ENCODE measurements at regions of chr2 and their contacts with region 1.

Region 1: GRCh38 chr2:217166241-217166850 is 306.5 kb upstream of the TNP1 start:
- DNase-seq: no peak
- ATAC-seq: peak; percentile 48 to 76 (median 69)
- H3K4me3 ChIP-seq: no peak overlapping the region
- H3K27ac ChIP-seq: no peak overlapping the region
- H3K4me1 ChIP-seq: peaks cover 19% of the 10 kb centered on the region
- H3K27me3 ChIP-seq: no peaks in the 10 kb centered on the region
- CTCF ChIP-seq: peak; percentile 70

Region 2: DNA sequence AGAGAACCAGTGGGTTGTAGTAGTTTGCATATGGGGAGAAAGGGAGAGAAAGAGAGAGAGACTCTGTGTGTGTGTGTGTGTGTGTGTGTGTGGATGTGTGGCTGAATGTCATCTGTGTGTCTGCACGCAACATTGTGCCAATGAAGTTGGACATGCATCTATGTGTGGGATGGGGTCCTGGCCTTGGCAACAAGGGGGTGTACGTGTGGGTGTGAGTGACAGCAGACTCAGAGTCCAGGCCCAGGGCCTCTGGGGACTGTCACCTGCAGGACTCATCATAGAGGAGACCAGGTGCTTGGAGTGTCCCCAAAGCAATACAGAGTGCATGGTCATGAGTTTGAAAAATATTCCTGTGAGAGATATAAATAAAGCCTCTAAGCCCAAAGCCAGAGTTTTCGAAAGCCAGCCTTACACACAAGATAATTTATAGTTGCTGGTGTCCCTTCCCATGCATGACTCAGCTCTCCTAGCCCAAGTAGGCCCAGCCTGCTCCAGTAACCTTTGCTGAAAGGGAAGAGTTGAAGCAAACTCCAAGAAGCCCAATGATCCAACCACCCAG is 366.4 kb before region 1 on chr2:
- intact Hi-C with region 1: loop called in 1 of 2 experiments (anchors 5 kb)
- DNase-seq: peak; percentile 69 to 85
- ATAC-seq: peak; percentile 76 to 80 (median 78)
- H3K4me3 ChIP-seq: no peak overlapping the region
- H3K27ac ChIP-seq: peak overlapping the region; percentile 97
- H3K4me1 ChIP-seq: peaks cover 58% of the 10 kb centered on the region
- H3K27me3 ChIP-seq: no peaks in the 10 kb centered on the region
- CTCF ChIP-seq: no peak

Region 3: DNA sequence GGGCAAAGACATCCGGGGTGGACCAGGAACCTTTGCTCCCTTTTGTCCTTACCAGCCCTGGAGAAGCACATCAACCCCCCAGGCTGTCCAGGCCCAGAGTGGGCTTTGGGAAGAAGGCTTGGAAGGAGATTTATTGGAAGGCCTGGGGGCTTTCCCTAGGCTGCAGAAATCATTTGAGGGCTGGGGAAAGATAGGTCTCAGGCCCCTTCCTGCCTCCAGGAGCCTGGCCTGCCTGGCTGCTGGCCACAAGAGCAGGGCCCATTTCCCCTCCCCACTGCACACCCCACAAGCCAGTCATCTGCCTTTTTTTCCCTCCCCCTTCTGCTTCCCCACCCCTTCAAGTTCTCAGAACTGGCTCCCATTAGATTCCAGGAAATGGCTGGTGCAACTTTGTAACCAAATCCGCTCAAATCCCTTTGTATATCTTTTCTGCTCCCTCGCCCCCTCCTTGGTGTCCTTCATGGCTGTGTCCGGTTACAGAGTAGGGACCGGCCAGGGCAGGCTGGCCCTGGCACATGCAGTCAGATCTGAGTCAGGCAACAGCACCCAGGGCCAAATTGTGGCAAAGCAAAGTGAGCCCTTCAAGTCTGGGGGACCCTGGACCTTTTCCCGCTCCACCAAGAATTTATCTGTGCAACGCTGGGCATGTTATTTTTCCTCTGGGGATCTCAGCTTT is 285.7 kb before region 1 on chr2:
- intact Hi-C with region 1: loop called in 1 of 2 experiments (anchors 10 kb)
- DNase-seq: peak; percentile 72 to 90
- ATAC-seq: peak; percentile 87 to 91 (median 88)
- H3K4me3 ChIP-seq: no peak overlapping the region
- H3K27ac ChIP-seq: peak overlapping the region; percentile 90
- H3K4me1 ChIP-seq: peaks cover 75% of the 10 kb centered on the region
- H3K27me3 ChIP-seq: no peaks in the 10 kb centered on the region
- CTCF ChIP-seq: no peak

Region 4: GRCh38 chr2:217000404-217000803 is 165.9 kb before region 1 on chr2:
- intact Hi-C with region 1: loop called in 1 of 2 experiments (anchors 10 kb)
- DNase-seq: no peak
- ATAC-seq: peak in 1 of 4 donors; percentile 51
- H3K4me3 ChIP-seq: no peak overlapping the region
- H3K27ac ChIP-seq: no peak overlapping the region
- H3K4me1 ChIP-seq: peaks cover 4% of the 10 kb centered on the region
- H3K27me3 ChIP-seq: no peaks in the 10 kb centered on the region
- CTCF ChIP-seq: no peak

Region 5: DNA sequence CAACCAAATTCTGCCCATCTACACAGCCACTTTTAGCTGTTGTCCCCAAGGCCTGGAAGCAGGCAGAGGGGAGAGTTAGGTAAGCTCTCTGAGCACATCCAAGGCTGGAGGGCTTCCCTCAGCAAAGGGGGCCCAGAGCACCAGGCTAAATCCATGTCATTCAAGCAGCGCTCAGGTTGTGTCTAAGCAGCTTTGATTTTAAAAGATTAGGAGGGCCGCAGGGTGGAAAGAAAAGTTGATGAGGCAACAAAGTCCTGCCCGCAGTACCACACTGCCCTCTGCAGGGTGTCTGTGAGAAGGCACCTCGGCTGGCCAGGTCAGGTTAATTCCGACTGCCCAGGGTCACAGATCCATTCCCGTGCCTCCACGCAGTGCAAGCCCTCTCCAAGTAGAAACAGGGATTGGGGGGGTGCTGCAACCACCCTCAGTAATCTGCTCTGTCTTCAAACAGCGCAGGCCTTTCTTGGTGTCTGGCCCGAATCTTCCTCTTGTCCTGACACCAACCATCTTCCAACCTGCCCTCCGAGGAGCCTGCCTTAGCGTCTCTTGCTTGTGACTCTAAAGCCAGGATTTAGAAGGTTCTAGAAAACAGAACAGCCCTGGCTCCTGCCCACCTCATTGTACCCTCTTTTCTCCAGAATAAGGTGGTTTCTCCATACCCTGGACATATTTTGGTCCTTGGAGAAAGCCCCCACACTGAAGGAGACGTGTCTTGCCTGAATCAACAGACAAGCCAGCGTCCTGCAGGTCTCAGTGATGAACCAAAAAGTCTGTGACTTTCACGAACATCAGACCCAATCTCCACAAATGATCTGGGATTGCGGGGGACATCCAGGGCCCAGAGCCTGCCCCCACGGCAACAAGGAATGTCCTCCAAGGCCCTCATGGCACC is 547.3 kb after region 1 on chr2:
- intact Hi-C with region 1: loop called in 1 of 2 experiments (anchors 10 kb)
- DNase-seq: peak; percentile 74 to 88
- ATAC-seq: peak; percentile 89 to 96 (median 91)
- H3K4me3 ChIP-seq: no peak overlapping the region
- H3K27ac ChIP-seq: peak overlapping the region; percentile 2
- H3K4me1 ChIP-seq: peaks cover 17% of the 10 kb centered on the region
- H3K27me3 ChIP-seq: no peaks in the 10 kb centered on the region
- CTCF ChIP-seq: peak; percentile 98